Body of pancreas (tissue), 4 donors: ENCODE measurements at regions of chr1 and their contacts with region 1.

Region 1: GRCh38 chr1:167076136-167076710 is 14.0 kb downstream of the GPA33 start:
- DNase-seq: no peak
- ATAC-seq: no peak
- H3K4me3 ChIP-seq: no peak overlapping the region
- H3K27ac ChIP-seq: no peak overlapping the region
- H3K4me1 ChIP-seq: no peaks in the 10 kb centered on the region
- H3K27me3 ChIP-seq: no peaks in the 10 kb centered on the region
- CTCF ChIP-seq: no peak
- POLR2A ChIP-seq: no peak

Region 2: DNA sequence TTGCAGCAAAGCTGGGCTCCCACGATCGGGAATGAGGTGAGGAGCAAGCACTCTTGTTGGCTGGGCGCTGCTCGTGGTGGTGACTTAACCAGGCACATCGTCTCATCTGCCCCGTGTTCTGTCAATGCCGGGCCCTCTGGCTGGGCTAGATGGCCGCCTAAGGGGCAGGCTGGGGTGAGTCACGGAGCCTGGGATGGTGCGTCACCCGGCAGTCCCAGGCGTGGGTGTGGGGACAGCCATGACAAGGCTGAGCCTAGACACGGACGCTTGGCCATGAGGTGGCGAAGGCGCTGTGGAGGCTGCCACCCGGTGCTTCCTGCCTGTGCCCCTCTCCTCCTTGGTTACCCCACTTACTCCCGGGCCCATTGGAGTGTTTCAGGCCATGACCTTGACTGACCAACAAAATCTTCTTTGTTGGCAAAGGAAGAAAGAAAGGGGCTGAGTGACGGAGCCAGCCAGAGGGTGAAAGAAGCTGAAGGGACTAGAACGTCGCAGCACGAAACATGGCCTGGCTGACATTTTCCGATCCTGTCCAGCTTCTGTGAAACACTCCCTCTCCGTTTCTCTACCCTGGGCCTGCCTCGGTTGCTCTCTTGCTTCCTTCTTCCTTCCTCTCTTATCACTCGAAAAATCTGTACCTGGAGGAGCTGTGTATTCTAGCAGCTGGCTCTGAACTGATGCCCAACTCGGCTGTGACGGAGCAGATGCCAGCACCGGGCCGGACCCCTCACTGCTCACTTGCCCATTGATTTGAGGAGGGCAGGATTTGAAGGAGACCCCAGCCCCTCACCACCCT is 441.5 kb after region 1 on chr1:
- intact Hi-C with region 1: loop called (anchors 10 kb)
- DNase-seq: no peak
- ATAC-seq: no peak
- H3K4me3 ChIP-seq: no peak overlapping the region
- H3K27ac ChIP-seq: no peak overlapping the region
- H3K4me1 ChIP-seq: no peaks in the 10 kb centered on the region
- H3K27me3 ChIP-seq: peaks cover 0 to 3% of the 10 kb centered on the region in 2 donors
- CTCF ChIP-seq: no peak
- POLR2A ChIP-seq: no peak